ENCODE measurements at regions of chr7 and their contacts with region 1.

Region 1: GRCh38 chr7:38335492-38336147 is 62.2 kb upstream of the TARP start:
- DNase-seq: peak; percentile 62 to 92 (median 81)
- ATAC-seq: peak; percentile 78
- H3K4me3 ChIP-seq: peak overlapping the region; percentile 14 to 52
- H3K4me3 Mint-ChIP-seq: peak overlapping the region; percentile 80
- H3K27ac ChIP-seq: peak overlapping the region; percentile 20 to 70
- H3K27ac Mint-ChIP-seq: peak overlapping the region; percentile 89
- H3K4me1 ChIP-seq: peaks cover 26% of the 10 kb centered on the region
- H3K4me1 Mint-ChIP-seq: peaks cover 50% of the 10 kb centered on the region
- H3K27me3 ChIP-seq: no peaks in the 10 kb centered on the region
- H3K27me3 Mint-ChIP-seq: no peaks in the 10 kb centered on the region
- CTCF ChIP-seq: peak; percentile 82

Region 2: DNA sequence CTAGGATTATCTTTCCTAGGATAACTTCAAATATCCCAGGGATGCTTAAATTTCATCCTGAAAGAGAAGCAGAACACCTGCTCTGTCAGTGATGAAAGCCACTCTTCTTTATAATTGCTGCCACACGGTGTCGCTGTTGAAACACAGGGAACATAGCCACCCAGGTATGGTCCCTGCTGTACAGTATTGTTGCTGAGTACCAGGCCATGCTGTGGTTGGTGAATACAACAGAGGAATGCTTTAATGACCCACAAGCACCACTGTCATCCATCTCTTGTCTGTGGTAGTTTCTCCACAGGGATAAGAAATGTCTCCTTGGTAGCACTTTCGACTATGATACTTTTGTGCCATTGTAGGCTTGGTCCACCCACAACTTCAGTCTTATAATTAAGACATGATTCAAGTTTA is 228.1 kb before region 1 on chr7:
- CTCF ChIA-PET with region 1: interaction called, 15 read pairs
- POLR2A ChIA-PET with region 1: no interaction called
- intact Hi-C with region 1: no loop called
- DNase-seq: peak; percentile 33 to 80 (median 71)
- ATAC-seq: peak; percentile 87
- H3K4me3 ChIP-seq: no peak overlapping the region
- H3K4me3 Mint-ChIP-seq: no peak overlapping the region
- H3K27ac ChIP-seq: no peak overlapping the region
- H3K27ac Mint-ChIP-seq: no peak overlapping the region
- H3K4me1 ChIP-seq: no peaks in the 10 kb centered on the region
- H3K4me1 Mint-ChIP-seq: peaks cover 2% of the 10 kb centered on the region
- H3K27me3 ChIP-seq: peaks cover 0 to 2% of the 10 kb centered on the region in 2 experiments
- H3K27me3 Mint-ChIP-seq: peaks cover 8% of the 10 kb centered on the region
- CTCF ChIP-seq: peak; percentile 89

Region 3: DNA sequence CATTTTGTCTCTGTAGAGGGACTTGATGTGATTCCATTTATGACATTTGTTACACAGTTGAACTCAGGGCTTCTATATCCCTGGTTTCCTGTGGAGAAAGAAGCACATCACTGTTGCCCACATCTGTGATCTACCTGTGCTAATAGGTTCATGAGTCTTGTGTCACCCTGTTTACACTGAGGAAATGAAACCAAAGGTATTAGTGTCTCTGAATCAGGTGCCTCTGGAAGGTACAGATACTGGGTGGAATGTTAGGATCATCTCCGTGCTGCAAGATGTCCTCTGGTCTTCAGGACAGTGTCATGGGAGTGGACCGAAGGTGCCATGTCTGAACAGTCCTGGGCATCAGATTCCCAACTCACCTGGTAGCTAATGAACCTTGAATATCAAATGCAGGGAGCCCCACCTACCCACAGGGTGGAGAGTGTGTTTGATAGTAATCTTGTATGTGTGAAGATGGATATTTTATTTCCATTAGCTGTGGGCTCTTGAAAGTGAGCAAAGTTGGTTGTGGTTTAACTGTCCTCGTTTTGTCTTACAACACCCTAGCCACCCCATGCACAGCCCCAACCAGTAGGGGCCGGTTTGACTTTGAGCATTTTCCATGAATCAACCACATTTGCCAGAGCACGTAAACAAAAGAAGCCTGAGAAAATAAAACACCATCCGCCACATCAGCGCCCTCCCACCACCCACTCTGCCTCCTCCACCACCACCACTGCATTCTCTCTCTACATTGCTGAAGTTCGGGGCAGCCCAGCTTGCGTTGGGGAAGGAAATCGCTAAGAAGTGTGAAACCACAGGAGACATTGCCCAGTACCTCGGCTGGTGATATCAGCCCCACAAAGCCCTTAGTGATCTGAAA is 102.9 kb before region 1 on chr7:
- CTCF ChIA-PET with region 1: interaction called, 11 read pairs
- POLR2A ChIA-PET with region 1: interaction called, 4 read pairs
- intact Hi-C with region 1: no loop called
- DNase-seq: peak; percentile 53 to 95 (median 72)
- ATAC-seq: peak; percentile 77
- H3K4me3 ChIP-seq: peak overlapping the region in 1 of 2 experiments; percentile 17
- H3K4me3 Mint-ChIP-seq: peak overlapping the region; percentile 69
- H3K27ac ChIP-seq: peak overlapping the region; percentile 36 to 78
- H3K27ac Mint-ChIP-seq: peak overlapping the region; percentile 94
- H3K4me1 ChIP-seq: peaks cover 45% of the 10 kb centered on the region
- H3K4me1 Mint-ChIP-seq: peaks cover 89% of the 10 kb centered on the region
- H3K27me3 ChIP-seq: no peaks in the 10 kb centered on the region
- H3K27me3 Mint-ChIP-seq: no peaks in the 10 kb centered on the region
- CTCF ChIP-seq: no peak

Region 4: DNA sequence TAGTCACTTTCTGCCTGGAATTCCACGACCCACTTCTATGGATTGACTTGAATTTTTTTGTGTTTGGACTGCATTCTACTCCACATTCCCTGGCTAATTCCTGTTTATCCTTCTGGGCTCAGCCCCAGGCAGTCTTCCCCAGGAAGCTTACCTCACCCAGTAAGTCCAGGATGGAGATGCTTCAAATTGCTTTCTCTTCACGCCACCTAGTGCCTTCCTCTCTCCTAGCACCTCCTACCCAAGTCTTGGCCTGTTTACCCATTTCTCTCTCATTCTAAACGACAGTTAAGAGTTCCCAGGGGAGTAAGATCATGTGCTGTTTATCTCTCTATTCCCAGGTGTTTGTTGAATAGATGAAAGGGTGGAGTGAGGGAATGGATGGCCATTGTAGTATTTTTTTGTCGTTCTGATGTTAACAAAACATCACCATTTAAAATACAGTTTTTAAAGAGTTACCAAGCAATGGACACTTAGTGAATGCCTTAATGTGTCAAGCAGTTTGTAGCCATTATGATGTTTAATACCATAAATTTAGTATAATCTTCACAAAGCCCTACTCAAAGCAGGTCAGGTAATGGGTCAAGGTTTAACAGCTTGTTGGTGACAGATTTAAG is 16.7 kb before region 1 on chr7:
- CTCF ChIA-PET with region 1: interaction called, 88 read pairs
- POLR2A ChIA-PET with region 1: interaction called, 5 read pairs
- intact Hi-C with region 1: no loop called
- DNase-seq: peak in 2 of 9 experiments; percentile 61 to 74
- ATAC-seq: peak; percentile 30
- H3K4me3 ChIP-seq: peak overlapping the region in 1 of 2 experiments; percentile 50
- H3K4me3 Mint-ChIP-seq: peak overlapping the region; percentile 78
- H3K27ac ChIP-seq: peak overlapping the region in 1 of 2 experiments; percentile 81
- H3K27ac Mint-ChIP-seq: peak overlapping the region; percentile 91
- H3K4me1 ChIP-seq: peaks cover 37% of the 10 kb centered on the region
- H3K4me1 Mint-ChIP-seq: peaks cover 57% of the 10 kb centered on the region
- H3K27me3 ChIP-seq: no peaks in the 10 kb centered on the region
- H3K27me3 Mint-ChIP-seq: no peaks in the 10 kb centered on the region
- CTCF ChIP-seq: peak; percentile 39

Region 5: GRCh38 chr7:38360776-38361175 is 25.2 kb after region 1 on chr7:
- CTCF ChIA-PET with region 1: interaction called, 76 read pairs
- POLR2A ChIA-PET with region 1: interaction called, 6 read pairs
- intact Hi-C with region 1: no loop called
- DNase-seq: no peak
- ATAC-seq: no peak
- H3K4me3 ChIP-seq: peak overlapping the region; percentile 63 to 65
- H3K4me3 Mint-ChIP-seq: peak overlapping the region; percentile 91
- H3K27ac ChIP-seq: peak overlapping the region in 1 of 2 experiments; percentile 14
- H3K27ac Mint-ChIP-seq: peak overlapping the region; percentile 94
- H3K4me1 ChIP-seq: peaks cover 19% of the 10 kb centered on the region
- H3K4me1 Mint-ChIP-seq: peaks cover 72% of the 10 kb centered on the region
- H3K27me3 ChIP-seq: no peaks in the 10 kb centered on the region
- H3K27me3 Mint-ChIP-seq: no peaks in the 10 kb centered on the region
- CTCF ChIP-seq: no peak